ENCODE measurements at regions of chr2 and their contacts with region 1.

Region 1: DNA sequence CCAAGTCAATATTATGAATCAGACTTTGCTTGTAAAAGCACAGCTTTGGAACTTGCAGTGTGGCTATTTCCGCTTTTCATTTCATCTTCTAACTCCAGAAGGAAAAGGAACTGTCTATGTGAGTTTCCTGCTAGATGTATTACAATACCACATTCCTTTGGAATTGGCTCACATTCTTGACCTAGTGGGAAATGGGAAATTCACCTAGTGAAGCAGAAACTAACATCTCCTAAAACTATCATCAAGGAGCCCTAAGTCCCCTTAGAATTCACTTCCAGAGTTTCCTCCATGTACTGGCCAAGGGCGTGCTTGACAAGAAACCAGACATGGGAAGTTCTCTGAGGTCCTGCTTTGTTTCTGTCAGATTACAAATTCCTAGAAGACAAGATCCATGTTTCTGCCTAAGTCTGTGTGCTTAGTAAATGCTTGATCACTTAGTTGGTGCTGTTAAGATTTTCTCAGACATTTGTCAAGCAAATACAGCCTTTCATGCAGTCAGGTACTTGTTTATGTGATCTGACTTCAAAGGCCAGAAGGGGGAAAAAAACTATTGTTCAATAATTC is 275.7 kb upstream of the FN1 start:
- DNase-seq: peak in 1 of 2 experiments; percentile 62
- H3K4me3 ChIP-seq: no peak overlapping the region
- H3K4me3 Mint-ChIP-seq: no peak overlapping the region
- H3K27ac Mint-ChIP-seq: peak overlapping the region; percentile 74
- H3K4me1 ChIP-seq: peaks cover 75% of the 10 kb centered on the region
- H3K4me1 Mint-ChIP-seq: peaks cover 53% of the 10 kb centered on the region
- H3K27me3 ChIP-seq: no peaks in the 10 kb centered on the region
- H3K27me3 Mint-ChIP-seq: no peaks in the 10 kb centered on the region
- CTCF ChIP-seq: no peak

Region 2: GRCh38 chr2:215435809-215436704 is 275.5 kb before region 1 on chr2 and contains the start of gene FN1:
- CTCF ChIA-PET with region 1: no interaction called
- POLR2A ChIA-PET with region 1: no interaction called
- intact Hi-C with region 1: loop called (anchors 5 kb)
- DNase-seq: peak; percentile 95 to 96
- H3K4me3 ChIP-seq: peak within 1 kb of the TSS; percentile 99
- H3K4me3 Mint-ChIP-seq: peak within 1 kb of the TSS; percentile 84
- H3K27ac Mint-ChIP-seq: peak within 1 kb of the TSS; percentile 94
- H3K4me1 ChIP-seq: peaks cover 40% of the 10 kb centered on the region
- H3K4me1 Mint-ChIP-seq: peaks cover 26% of the 10 kb centered on the region
- H3K27me3 ChIP-seq: no peaks in the 10 kb centered on the region
- H3K27me3 Mint-ChIP-seq: no peaks in the 10 kb centered on the region
- CTCF ChIP-seq: no peak
- total RNA-seq, gene FN1: 3,805 and 3,872 TPM in 2 replicates

Region 3: DNA sequence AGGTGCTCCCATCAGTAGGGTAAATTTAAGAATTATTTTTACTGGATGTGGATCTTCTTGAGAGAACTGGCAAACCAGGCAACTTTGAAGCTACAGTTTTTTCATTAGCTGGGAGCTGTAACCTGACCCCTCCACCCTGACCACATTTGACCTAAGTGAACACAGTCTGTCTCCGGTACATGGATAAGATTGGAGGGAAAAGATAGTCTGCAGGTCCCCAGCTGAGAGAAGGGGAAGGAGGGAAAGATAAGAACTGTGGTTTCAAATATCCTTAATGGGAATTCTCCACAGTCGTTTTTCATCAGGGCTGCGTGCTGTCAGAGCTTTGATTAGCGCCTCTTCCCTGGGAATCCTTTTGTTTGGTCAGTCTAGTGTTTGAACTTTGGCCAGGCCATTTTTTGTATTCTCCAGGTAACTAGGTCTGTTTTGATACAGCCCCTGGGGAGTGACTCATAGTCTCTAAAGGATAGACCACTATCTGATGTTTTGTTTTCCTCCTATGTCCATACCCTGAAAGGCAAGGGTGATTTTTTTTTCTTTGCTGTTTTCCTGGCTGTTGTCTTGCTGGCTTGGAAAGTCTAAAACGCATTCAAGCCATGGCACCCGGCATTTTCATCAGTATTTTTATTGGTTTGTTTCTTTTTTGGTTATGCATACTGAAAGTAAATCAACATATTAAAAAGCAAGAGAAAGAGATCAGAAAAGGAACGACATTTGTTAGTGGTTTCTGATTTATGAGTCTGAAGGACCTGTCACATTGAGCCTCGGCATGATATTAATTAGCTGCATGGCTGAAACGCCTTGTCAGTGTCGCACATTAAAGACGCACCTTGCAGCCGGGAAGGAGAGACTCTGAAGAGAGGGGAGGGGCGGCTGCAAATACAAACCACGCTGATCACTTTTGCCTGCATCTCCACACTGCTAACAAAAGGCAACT is 92.3 kb before region 1 on chr2:
- CTCF ChIA-PET with region 1: interaction called, 7 read pairs
- POLR2A ChIA-PET with region 1: interaction called, 5 read pairs
- intact Hi-C with region 1: loop called (anchors 1 kb)
- DNase-seq: peak; percentile 89 to 94
- H3K4me3 ChIP-seq: peak overlapping the region; percentile 10; the same call in 1 of the 2 replicates
- H3K4me3 Mint-ChIP-seq: peak overlapping the region; percentile 68
- H3K27ac Mint-ChIP-seq: peak overlapping the region; percentile 95
- H3K4me1 ChIP-seq: peaks cover 58% of the 10 kb centered on the region
- H3K4me1 Mint-ChIP-seq: peaks cover 50% of the 10 kb centered on the region
- H3K27me3 ChIP-seq: no peaks in the 10 kb centered on the region
- H3K27me3 Mint-ChIP-seq: no peaks in the 10 kb centered on the region
- CTCF ChIP-seq: no peak

Region 4: DNA sequence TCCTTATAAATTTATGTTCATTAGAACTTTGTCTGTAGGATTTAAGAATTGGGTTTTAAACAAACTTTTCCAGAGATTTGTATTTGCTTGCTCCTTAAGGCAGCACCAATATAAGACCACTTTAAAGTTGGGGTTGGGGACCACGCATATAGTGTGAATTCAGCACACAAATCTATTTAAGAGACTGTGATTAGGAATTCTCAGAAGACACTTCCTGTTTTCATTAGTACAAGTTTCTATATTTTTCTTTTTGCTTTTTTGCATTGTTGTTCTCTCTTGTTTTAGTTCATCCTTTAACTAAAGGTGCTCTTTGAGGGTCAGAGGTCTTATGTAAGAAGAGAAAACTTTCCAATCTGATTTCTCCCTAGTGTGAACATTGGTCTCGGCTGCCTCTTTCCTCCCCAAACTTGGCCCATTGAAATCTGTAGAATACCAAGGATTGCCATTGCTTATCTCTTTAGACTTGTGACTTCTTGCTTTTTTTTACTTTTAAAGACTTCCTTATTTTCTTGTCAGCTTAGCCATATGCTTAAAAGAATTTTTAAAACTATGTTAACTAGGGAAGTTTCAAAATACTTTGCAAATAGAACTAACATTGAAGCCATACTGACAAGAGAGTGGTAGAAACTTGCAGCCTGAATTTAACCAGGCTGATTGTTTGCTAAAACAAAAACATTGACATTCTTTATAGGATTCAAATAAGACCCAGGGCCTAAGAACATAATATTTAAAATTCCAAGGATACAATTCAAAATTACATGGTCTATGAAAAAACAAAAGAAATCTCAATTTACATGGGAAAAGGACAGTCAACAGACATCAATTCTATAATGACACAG is 11.6 kb before region 1 on chr2:
- CTCF ChIA-PET with region 1: no interaction called
- POLR2A ChIA-PET with region 1: no interaction called
- intact Hi-C with region 1: loop called (anchors 1 kb)
- DNase-seq: no peak
- H3K4me3 ChIP-seq: no peak overlapping the region
- H3K4me3 Mint-ChIP-seq: no peak overlapping the region
- H3K27ac Mint-ChIP-seq: peak overlapping the region; percentile 26
- H3K4me1 ChIP-seq: peaks cover 16% of the 10 kb centered on the region
- H3K4me1 Mint-ChIP-seq: peaks cover 35% of the 10 kb centered on the region
- H3K27me3 ChIP-seq: no peaks in the 10 kb centered on the region
- H3K27me3 Mint-ChIP-seq: no peaks in the 10 kb centered on the region
- CTCF ChIP-seq: no peak

Region 5: GRCh38 chr2:215773728-215774127 is 62.2 kb after region 1 on chr2:
- CTCF ChIA-PET with region 1: no interaction called
- POLR2A ChIA-PET with region 1: no interaction called
- intact Hi-C with region 1: loop called (anchors 1 kb)
- DNase-seq: no peak
- H3K4me3 ChIP-seq: no peak overlapping the region
- H3K4me3 Mint-ChIP-seq: no peak overlapping the region
- H3K27ac Mint-ChIP-seq: peak overlapping the region; percentile 56
- H3K4me1 ChIP-seq: peaks cover 35% of the 10 kb centered on the region
- H3K4me1 Mint-ChIP-seq: peaks cover 32% of the 10 kb centered on the region
- H3K27me3 ChIP-seq: no peaks in the 10 kb centered on the region
- H3K27me3 Mint-ChIP-seq: no peaks in the 10 kb centered on the region
- CTCF ChIP-seq: no peak

Region 6: DNA sequence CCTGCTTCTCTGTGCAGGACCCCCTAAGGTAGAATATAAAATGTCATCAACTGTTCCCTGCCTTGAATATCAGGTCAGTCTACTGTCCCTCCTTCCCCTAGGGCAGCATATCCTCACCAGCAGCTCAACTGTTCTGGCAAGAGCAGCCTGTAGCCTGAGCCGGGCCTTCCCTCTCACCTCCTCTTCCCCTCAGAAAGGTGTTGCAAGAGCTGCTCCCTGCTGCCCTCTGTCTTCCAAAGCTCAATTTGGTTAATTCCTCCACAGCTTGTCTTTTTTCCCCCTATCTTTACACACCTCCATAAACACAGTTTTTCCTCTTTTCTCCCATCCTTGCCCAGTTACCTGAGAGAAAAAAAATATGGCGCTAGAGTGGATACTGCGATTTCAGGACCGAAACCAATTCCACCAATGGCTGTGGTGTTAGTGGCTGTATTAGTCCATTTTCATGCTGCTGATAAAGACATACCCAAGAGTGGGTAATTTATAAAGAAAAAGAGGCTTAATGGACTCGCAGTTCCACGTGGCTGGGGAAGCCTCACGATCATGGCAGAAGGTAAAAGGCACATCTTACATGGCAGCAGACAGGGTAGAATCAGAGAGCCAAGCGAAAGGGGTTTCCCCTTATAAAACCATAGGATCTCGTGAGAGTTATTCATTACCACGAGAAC is 117.1 kb after region 1 on chr2:
- CTCF ChIA-PET with region 1: no interaction called
- POLR2A ChIA-PET with region 1: no interaction called
- intact Hi-C with region 1: loop called (anchors 1 kb)
- DNase-seq: peak; percentile 66 to 80
- H3K4me3 ChIP-seq: no peak overlapping the region
- H3K4me3 Mint-ChIP-seq: no peak overlapping the region
- H3K27ac Mint-ChIP-seq: peak overlapping the region; percentile 79
- H3K4me1 ChIP-seq: peaks cover 80% of the 10 kb centered on the region
- H3K4me1 Mint-ChIP-seq: peaks cover 32% of the 10 kb centered on the region
- H3K27me3 ChIP-seq: no peaks in the 10 kb centered on the region
- H3K27me3 Mint-ChIP-seq: no peaks in the 10 kb centered on the region
- CTCF ChIP-seq: peak; percentile 54 to 66

Region 7: DNA sequence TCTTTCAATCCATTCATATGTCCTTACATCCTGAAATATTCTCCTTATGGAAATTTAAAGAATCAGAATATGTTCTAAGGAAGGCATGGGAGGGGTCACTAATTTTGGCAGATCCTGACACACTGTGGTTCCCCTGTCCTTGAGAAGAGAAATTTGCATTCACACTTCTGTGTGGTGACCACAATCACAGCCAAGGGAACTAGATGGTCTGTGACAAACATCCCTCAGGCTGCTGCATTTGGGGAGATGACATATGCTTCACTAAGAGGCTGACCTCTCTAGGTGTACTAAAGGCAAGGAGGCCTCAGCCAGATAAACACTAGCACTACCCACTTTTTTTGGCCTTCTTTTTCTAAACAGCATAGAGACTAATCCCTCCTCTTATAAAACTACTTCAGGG is 172.2 kb after region 1 on chr2:
- CTCF ChIA-PET with region 1: no interaction called
- POLR2A ChIA-PET with region 1: no interaction called
- intact Hi-C with region 1: no loop called
- DNase-seq: no peak
- H3K4me3 ChIP-seq: no peak overlapping the region
- H3K4me3 Mint-ChIP-seq: no peak overlapping the region
- H3K27ac Mint-ChIP-seq: no peak overlapping the region
- H3K4me1 ChIP-seq: peaks cover 20% of the 10 kb centered on the region
- H3K4me1 Mint-ChIP-seq: peaks cover 21% of the 10 kb centered on the region
- H3K27me3 ChIP-seq: no peaks in the 10 kb centered on the region
- H3K27me3 Mint-ChIP-seq: no peaks in the 10 kb centered on the region
- CTCF ChIP-seq: no peak

Region 8: GRCh38 chr2:215920244-215921100 is 208.9 kb after region 1 on chr2:
- CTCF ChIA-PET with region 1: no interaction called
- POLR2A ChIA-PET with region 1: no interaction called
- intact Hi-C with region 1: loop called (anchors 2 kb)
- DNase-seq: peak; percentile 71 to 83
- H3K4me3 ChIP-seq: no peak overlapping the region
- H3K4me3 Mint-ChIP-seq: no peak overlapping the region
- H3K27ac Mint-ChIP-seq: peak overlapping the region; percentile 45
- H3K4me1 ChIP-seq: peaks cover 23% of the 10 kb centered on the region
- H3K4me1 Mint-ChIP-seq: peaks cover 34% of the 10 kb centered on the region
- H3K27me3 ChIP-seq: no peaks in the 10 kb centered on the region
- H3K27me3 Mint-ChIP-seq: no peaks in the 10 kb centered on the region
- CTCF ChIP-seq: peak; percentile 88 to 91

Measured in Caco-2 (cell line).